ENCODE measurements at regions of chr14 and their contacts with region 1.

Region 1: DNA sequence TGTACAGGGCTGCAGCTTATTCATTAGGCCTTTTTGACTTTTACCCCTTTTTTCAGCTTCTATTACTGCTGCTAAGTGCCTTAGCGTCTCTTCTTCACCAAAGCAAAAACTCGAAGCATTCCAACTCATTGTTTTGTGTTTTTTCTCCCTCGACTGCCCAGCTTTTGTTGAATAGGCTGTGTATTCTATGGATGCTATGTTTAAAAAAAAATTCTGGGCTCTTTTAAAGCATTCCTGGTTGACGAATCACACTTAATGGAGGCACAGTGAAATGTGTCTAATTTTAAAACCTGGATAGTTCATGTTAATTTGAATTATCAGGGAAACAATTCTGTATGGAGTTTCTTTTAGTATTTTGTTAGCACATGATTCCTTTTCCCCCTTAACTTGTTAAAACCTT is 29.7 kb downstream of the KTN1 start:
- DNase-seq: no peak
- H3K4me3 ChIP-seq: no peak overlapping the region
- H3K27ac ChIP-seq: no peak overlapping the region
- H3K4me1 ChIP-seq: no peaks in the 10 kb centered on the region
- H3K27me3 ChIP-seq: no peaks in the 10 kb centered on the region
- CTCF ChIP-seq: no peak
- EP300 ChIP-seq: no peak
- POLR2A ChIP-seq: no peak

Region 2: GRCh38 chr14:55654243-55654642 is 44.6 kb after region 1 on chr14:
- intact Hi-C with region 1: loop called in 1 of 4 experiments (anchors 5 kb)
- DNase-seq: no peak
- H3K4me3 ChIP-seq: no peak overlapping the region
- H3K27ac ChIP-seq: no peak overlapping the region
- H3K4me1 ChIP-seq: no peaks in the 10 kb centered on the region
- H3K27me3 ChIP-seq: no peaks in the 10 kb centered on the region
- CTCF ChIP-seq: no peak
- EP300 ChIP-seq: no peak
- POLR2A ChIP-seq: no peak